SK-N-SH (cell line): ENCODE measurements at regions of chr11 and their contacts with region 1.

Region 1: DNA sequence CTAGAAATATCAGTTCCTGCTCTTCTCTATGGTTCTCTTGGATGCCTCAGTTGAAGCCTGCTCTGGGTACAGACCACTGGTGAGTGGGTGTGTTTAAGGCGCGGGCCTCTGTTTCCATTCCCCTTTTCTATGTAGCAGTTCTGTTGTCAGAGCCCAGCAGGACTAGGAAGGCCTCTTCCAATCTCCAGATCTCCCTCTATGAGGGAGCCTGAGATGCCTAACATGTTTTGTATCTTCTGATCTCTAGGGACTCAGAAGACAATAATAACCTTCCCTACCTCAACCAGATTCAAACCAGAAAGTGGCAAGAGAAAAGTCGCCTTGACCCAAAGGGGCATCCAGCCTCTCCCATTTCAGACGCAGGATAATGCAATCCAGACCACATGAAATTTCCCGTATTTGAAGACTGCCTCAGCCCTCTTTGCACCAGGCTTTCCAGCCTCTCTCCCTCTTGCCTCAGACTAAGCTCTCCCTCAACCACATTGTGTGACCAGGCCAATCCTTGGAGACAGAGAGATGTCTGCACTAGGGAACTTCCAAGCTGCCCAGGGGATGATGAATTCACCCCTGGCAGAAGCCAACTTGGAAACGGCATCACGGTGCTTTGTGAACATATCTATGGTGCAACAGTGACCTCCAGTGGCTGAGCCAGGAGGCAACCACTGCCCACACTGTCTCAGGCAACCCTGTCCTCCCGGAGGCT is 150.1 kb upstream of the UBASH3B start:
- DNase-seq: peak; percentile 82
- H3K4me3 ChIP-seq: no peak overlapping the region
- H3K27ac ChIP-seq: peak overlapping the region in 1 of 2 experiments; percentile 84; a peak in 3 of 4 replicates
- H3K4me1 ChIP-seq: peaks cover 0 to 6% of the 10 kb centered on the region in 2 experiments; a peak in 2 of 4 replicates
- H3K27me3 ChIP-seq: peaks cover 7% of the 10 kb centered on the region; the same call in 1 of the 2 replicates
- CTCF ChIP-seq: peak; percentile 89
- EP300 ChIP-seq: no peak
- RAD21 ChIP-seq: peak; percentile 98

Region 2: DNA sequence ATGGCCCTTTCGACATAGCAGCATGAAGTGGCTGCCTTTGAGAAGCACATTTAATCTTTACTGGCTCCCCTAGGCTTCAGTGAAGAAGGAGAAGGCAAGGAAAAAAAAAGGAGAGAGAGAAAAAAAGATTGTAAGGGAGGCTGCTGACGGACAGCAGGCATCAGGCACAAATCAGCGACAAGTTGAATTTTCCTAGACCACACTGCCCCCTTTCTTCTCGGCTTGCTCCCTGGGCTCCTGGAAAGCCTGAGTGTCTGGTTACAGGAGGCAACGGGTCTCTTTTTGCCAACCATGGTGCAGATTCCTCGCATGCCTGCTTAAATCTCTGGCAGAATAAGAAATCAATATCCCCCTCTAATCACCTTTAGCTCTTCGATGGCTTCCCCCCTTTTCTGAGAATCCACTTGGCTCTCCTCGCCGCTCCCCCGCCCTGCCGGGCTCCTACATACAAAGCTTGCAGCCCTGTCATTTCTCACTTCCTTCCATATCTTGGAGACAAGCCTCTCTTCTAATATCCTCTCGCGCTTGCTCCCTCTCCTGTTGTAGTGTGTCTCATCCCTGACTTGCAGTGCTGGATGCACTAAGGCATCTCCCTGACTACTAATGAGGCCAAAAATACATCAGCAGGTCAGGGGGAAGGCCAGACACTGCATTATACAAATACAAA is 403.7 kb before region 1 on chr11:
- CTCF ChIA-PET with region 1: interaction called, 18 read pairs
- POLR2A ChIA-PET with region 1: interaction called, 3 read pairs
- DNase-seq: peak; percentile 58
- H3K4me3 ChIP-seq: peak overlapping the region; percentile 77 to 80
- H3K27ac ChIP-seq: peak overlapping the region; percentile 94 to 98
- H3K4me1 ChIP-seq: peaks cover 9 to 37% of the 10 kb centered on the region in 2 experiments
- H3K27me3 ChIP-seq: no peaks in the 10 kb centered on the region
- CTCF ChIP-seq: peak; percentile 68
- EP300 ChIP-seq: peak in 1 of 2 experiments; percentile 14; a peak in 1 of 4 replicates
- RAD21 ChIP-seq: peak; percentile 82

Region 3: GRCh38 chr11:122202951-122203456 is 302.5 kb before region 1 on chr11:
- CTCF ChIA-PET with region 1: interaction called, 35 read pairs
- POLR2A ChIA-PET with region 1: no interaction called
- DNase-seq: peak; percentile 79
- H3K4me3 ChIP-seq: peak overlapping the region; percentile 47 to 67; a peak in 3 of 4 replicates
- H3K27ac ChIP-seq: peak overlapping the region; percentile 85 to 99
- H3K4me1 ChIP-seq: peaks cover 13 to 22% of the 10 kb centered on the region in 2 experiments
- H3K27me3 ChIP-seq: no peaks in the 10 kb centered on the region
- CTCF ChIP-seq: peak; percentile 98
- EP300 ChIP-seq: peak in 1 of 2 experiments; percentile 37; a peak in 1 of 4 replicates
- RAD21 ChIP-seq: peak; percentile 90

Region 4: GRCh38 chr11:122491509-122491908 is 13.9 kb before region 1 on chr11:
- CTCF ChIA-PET with region 1: interaction called, 26 read pairs
- POLR2A ChIA-PET with region 1: no interaction called
- DNase-seq: no peak
- H3K4me3 ChIP-seq: no peak overlapping the region
- H3K27ac ChIP-seq: no peak overlapping the region
- H3K4me1 ChIP-seq: peaks cover 0 to 3% of the 10 kb centered on the region in 2 experiments; a peak in 2 of 4 replicates
- H3K27me3 ChIP-seq: peaks cover 4% of the 10 kb centered on the region; the same call in 1 of the 2 replicates
- CTCF ChIP-seq: no peak
- EP300 ChIP-seq: no peak
- RAD21 ChIP-seq: no peak

Region 5: GRCh38 chr11:122523846-122524805 is 18.7 kb after region 1 on chr11:
- CTCF ChIA-PET with region 1: interaction called, 17 read pairs
- POLR2A ChIA-PET with region 1: no interaction called
- DNase-seq: peak; percentile 43
- H3K4me3 ChIP-seq: no peak overlapping the region; a peak in 1 of 4 replicates
- H3K27ac ChIP-seq: peak overlapping the region in 1 of 2 experiments; percentile 99; a peak in 2 of 4 replicates
- H3K4me1 ChIP-seq: peaks cover 10 to 31% of the 10 kb centered on the region in 2 experiments; a peak in 3 of 4 replicates
- H3K27me3 ChIP-seq: no peaks in the 10 kb centered on the region; the same call in 1 of the 2 replicates
- CTCF ChIP-seq: no peak
- EP300 ChIP-seq: peak in 1 of 2 experiments; percentile 77; a peak in 2 of 4 replicates
- RAD21 ChIP-seq: peak; percentile 20; the same call in 1 of the 2 replicates